CD4-positive, alpha-beta T cell (primary cell): ENCODE measurements at regions of chr15 and their contacts with region 1.

Region 1: DNA sequence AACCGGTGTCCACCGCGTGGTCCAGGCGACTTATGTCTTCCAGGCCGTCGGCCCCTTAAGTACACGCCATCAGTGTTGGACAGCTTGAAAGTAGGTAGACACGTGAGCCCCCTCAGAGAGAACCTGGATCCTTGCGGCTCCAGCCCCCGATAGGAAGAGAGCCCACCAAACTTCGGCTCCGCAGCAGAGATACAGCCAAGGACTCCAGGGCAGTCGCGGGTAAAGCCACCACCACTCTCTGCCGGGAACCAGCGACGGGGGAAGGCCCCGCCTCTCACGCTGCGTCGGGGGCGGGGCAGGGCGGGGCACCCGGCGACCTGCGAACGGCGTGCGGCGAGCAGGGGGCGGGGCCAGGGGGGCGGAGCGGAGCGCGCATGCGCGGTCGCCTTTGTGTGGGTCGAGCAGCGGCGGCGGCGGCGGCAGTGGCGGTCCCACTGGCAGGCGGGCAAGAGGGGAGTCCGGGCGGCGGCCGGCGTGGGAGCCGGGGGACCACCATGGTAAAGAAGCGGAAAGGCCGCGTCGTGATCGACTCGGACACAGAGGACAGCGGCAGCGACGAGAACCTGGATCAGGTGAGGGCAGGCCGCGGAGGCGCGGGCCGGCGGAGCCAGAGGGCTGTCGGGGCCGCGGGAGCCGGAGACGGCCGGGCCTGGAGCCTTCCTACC is at the start of gene RTF1:
- DNase-seq: peak; percentile 91 to 99 (median 97)
- ATAC-seq: peak; percentile 96
- H3K4me3 ChIP-seq: peak within 1 kb of the TSS; percentile 97
- H3K4me3 Mint-ChIP-seq: peak within 1 kb of the TSS; percentile 90
- H3K27ac ChIP-seq: peak within 1 kb of the TSS; percentile 48 to 72
- H3K27ac Mint-ChIP-seq: peak within 1 kb of the TSS; percentile 92
- H3K4me1 ChIP-seq: peaks cover 30% of the 10 kb centered on the region
- H3K4me1 Mint-ChIP-seq: peaks cover 47% of the 10 kb centered on the region
- H3K27me3 ChIP-seq: no peaks in the 10 kb centered on the region
- H3K27me3 Mint-ChIP-seq: no peaks in the 10 kb centered on the region
- CTCF ChIP-seq: no peak
- total RNA-seq, gene RTF1: 29.9 to 34.2 TPM

Region 2: GRCh38 chr15:40694688-40695468 is 722.0 kb before region 1 on chr15 and contains the start of gene RAD51:
- CTCF ChIA-PET with region 1: no interaction called
- POLR2A ChIA-PET with region 1: no interaction called
- intact Hi-C with region 1: loop called in 1 of 2 experiments (anchors 10 kb)
- DNase-seq: peak; percentile 87 to 96 (median 93)
- ATAC-seq: peak; percentile 91
- H3K4me3 ChIP-seq: peak within 1 kb of the TSS; percentile 82
- H3K4me3 Mint-ChIP-seq: peak within 1 kb of the TSS; percentile 97
- H3K27ac ChIP-seq: peak within 1 kb of the TSS; percentile 94 to 99
- H3K27ac Mint-ChIP-seq: peak within 1 kb of the TSS; percentile 98
- H3K4me1 ChIP-seq: peaks cover 23% of the 10 kb centered on the region
- H3K4me1 Mint-ChIP-seq: peaks cover 21% of the 10 kb centered on the region
- H3K27me3 ChIP-seq: no peaks in the 10 kb centered on the region
- H3K27me3 Mint-ChIP-seq: no peaks in the 10 kb centered on the region
- CTCF ChIP-seq: no peak
- total RNA-seq, gene RAD51: 0.64 to 1.5 TPM

Region 3: DNA sequence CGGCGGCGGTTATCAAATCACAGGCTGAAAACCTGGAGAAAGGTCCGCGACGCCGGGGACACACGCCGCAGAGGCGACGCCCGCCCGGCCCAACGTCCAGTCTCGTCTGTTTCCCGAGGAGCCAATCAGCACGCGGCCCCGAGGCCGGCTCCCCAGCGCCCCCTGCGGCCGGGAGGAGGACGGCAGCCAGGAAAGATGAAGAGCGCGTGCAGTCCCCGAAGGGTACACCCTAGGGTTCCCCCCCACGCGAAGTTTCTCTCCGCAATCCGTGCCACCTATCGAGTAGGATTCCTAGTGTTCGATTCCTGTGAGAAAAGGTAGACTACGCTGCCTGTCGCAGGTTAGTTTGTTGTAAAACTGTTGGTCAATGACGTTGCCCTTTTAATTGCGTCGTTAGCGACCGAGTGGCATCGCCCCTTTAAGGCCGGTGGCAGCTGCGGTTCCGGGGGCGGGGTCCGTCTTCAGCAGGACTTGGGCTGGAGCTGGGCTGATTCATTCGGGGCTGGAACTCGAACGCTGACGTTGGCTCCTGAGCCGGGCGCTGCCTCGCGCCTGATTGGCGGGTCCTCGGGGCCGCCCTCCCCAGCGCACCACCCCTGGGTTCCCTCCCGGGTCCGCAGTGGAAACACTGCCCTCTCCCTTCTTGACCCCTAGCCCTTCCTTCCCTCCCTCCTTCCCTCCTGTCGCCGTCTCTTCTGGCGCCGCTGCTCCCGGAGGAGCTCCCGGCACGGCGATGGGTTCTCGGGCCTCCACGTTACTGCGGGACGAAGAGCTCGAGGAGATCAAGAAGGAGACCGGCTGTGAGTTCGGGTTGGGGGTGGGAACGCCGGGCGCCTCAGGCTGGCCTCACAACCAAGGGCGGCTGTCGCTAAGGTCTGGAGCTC is 186.0 kb before region 1 on chr15 and contains the starts of genes CHP1 and EXD1:
- CTCF ChIA-PET with region 1: no interaction called
- POLR2A ChIA-PET with region 1: interaction called, 3 read pairs
- intact Hi-C with region 1: loop called in 1 of 2 experiments (anchors 5 kb)
- DNase-seq: peak; percentile 87 to 97 (median 93)
- ATAC-seq: peak; percentile 93
- H3K4me3 ChIP-seq: peak within 1 kb of the TSS; percentile 88
- H3K4me3 Mint-ChIP-seq: peak within 1 kb of the TSS; percentile 93
- H3K27ac ChIP-seq: peak within 1 kb of the TSS; percentile 54 to 64
- H3K27ac Mint-ChIP-seq: peak within 1 kb of the TSS; percentile 88
- H3K4me1 ChIP-seq: peaks cover 20% of the 10 kb centered on the region
- H3K4me1 Mint-ChIP-seq: peaks cover 40% of the 10 kb centered on the region
- H3K27me3 ChIP-seq: no peaks in the 10 kb centered on the region
- H3K27me3 Mint-ChIP-seq: no peaks in the 10 kb centered on the region
- CTCF ChIP-seq: peak; percentile 98
- total RNA-seq, gene CHP1: 20.7 to 25.5 TPM
- total RNA-seq, gene EXD1: not detected

Region 4: GRCh38 chr15:41827880-41828806 is 411.3 kb after region 1 on chr15 and contains the start of gene JMJD7:
- CTCF ChIA-PET with region 1: no interaction called
- POLR2A ChIA-PET with region 1: no interaction called
- intact Hi-C with region 1: loop called in 1 of 2 experiments (anchors 5 kb)
- DNase-seq: peak; percentile 92 to 99 (median 96)
- ATAC-seq: peak; percentile 94
- H3K4me3 ChIP-seq: peak within 1 kb of the TSS; percentile 92
- H3K4me3 Mint-ChIP-seq: peak within 1 kb of the TSS; percentile 90
- H3K27ac ChIP-seq: peak within 1 kb of the TSS; percentile 53 to 64
- H3K27ac Mint-ChIP-seq: peak within 1 kb of the TSS; percentile 87
- H3K4me1 ChIP-seq: peaks cover 52% of the 10 kb centered on the region
- H3K4me1 Mint-ChIP-seq: peaks cover 30% of the 10 kb centered on the region
- H3K27me3 ChIP-seq: no peaks in the 10 kb centered on the region
- H3K27me3 Mint-ChIP-seq: no peaks in the 10 kb centered on the region
- CTCF ChIP-seq: no peak
- total RNA-seq, gene JMJD7: 35.6 to 38.4 TPM